ENCODE measurements at regions of chr10 and their contacts with region 1.

Region 1: DNA sequence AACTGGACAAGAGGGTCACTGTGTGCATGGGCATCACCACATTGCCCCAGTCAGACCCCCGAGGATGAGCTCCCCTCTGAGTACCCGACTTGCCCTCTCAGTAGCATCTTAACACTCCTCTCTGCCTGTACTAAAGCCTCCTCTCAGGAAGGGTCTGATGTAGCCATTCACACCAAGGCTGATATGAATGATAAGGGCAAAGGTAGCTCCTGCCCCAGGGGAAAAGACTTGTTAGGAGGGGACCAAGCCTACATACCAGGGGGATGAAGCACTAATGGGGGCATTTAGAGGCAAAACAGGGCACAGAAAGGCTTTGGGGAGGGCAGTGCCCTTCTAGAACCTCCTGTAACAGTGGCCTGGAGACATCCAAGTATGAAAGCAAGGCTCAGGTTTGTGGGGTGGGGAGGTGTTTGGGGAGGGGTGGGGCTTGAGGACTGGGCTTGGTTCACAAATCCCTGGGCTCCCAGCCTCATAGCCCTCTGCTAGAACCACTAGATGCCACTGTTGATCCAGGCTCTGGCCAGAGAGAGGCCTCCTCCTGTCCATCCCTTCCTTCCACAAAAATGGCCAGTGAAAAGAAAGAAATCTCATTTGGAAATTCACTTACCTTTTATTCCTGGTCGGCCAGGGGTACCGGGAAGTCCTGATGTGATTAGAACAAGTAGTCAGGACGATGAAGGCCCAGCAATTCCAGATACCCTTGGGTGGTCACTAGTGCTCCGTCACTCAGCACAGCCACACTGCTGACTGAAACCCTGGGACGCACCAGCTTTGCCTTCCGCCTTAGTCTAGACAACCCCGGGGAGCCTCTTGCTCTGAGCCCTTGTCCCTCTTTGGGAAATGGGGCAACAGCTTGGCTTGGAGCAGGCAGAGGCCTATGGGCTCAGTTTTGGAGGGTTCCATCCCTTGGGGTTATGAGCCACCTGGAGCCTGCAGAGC is 40.3 kb downstream of the COL17A1 start:
- DNase-seq: peak in 1 of 5 donors; percentile 34
- ATAC-seq: peak; percentile 77 to 89 (median 80)
- H3K4me3 ChIP-seq: no peak overlapping the region
- H3K27ac ChIP-seq: no peak overlapping the region
- H3K4me1 ChIP-seq: peaks cover 0 to 13% (median 0%) of the 10 kb centered on the region in 12 donors
- H3K27me3 ChIP-seq: no peaks in the 10 kb centered on the region
- CTCF ChIP-seq: peak; percentile 42 to 68 (median 54)
- POLR2A ChIP-seq: no peak

Region 2: GRCh38 chr10:104067525-104067924 is 22.1 kb after region 1 on chr10:
- intact Hi-C with region 1: no loop called
- DNase-seq: no peak
- ATAC-seq: no peak
- H3K4me3 ChIP-seq: peak overlapping the region in 1 of 12 donors; percentile 26
- H3K27ac ChIP-seq: no peak overlapping the region
- H3K4me1 ChIP-seq: no peaks in the 10 kb centered on the region
- H3K27me3 ChIP-seq: no peaks in the 10 kb centered on the region
- CTCF ChIP-seq: no peak
- POLR2A ChIP-seq: no peak

Region 3: DNA sequence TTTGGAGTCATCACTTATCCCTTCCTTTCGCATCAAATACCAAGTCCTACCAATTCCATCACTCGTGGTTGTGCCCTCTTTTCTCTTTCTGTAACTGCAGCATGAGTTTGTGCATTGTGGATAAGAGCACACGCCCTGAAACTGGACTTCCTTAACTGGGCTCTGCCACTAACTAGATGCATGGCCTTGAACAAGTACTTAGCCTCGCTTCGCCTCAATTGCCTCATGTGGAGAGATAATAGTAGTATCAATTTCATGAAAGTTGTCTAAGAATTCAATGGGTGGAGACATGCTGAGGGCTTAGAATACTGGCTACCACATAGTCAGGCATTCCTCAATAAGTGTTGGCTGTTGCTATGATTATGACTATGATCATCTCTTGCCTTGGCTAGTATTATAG is 145.3 kb after region 1 on chr10:
- intact Hi-C with region 1: no loop called
- DNase-seq: no peak
- ATAC-seq: no peak
- H3K4me3 ChIP-seq: no peak overlapping the region
- H3K27ac ChIP-seq: no peak overlapping the region
- H3K4me1 ChIP-seq: no peaks in the 10 kb centered on the region
- H3K27me3 ChIP-seq: no peaks in the 10 kb centered on the region
- CTCF ChIP-seq: no peak
- POLR2A ChIP-seq: no peak

Region 4: DNA sequence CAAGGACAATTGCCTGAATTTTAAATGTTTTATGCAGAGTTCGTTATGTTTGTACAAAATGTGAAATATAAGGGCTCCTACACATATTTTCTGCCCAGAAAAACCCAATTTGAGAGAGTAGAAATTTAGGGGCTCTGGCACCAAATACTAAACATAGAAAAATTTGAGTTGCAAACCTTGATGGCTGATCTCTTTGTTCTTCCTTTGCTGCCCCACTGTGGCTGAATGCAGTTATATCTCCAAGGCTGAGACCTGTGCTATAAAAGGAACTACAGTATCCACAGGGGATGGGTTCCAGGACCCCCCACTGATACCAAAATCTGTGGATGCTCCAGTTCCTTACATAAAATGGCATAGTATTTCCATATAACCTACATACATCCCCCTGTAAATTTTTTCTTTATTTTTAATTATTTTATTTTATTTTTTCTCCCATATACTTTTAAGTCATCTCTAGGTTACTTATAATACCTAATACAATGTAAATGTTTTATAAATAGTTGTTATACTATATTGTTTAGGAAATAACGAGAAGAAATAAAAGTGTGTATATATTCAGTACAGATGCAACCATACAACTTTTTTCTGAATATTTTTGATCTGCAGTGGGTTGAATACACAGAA is 164.3 kb after region 1 on chr10:
- intact Hi-C with region 1: loop called (anchors 1 to 5 kb)
- DNase-seq: peak in 2 of 5 donors; percentile 20 to 33
- ATAC-seq: peak in 3 of 4 donors; percentile 49 to 71 (median 68)
- H3K4me3 ChIP-seq: no peak overlapping the region
- H3K27ac ChIP-seq: no peak overlapping the region
- H3K4me1 ChIP-seq: peaks cover 0 to 4% (median 0%) of the 10 kb centered on the region in 12 donors
- H3K27me3 ChIP-seq: no peaks in the 10 kb centered on the region
- CTCF ChIP-seq: peak; percentile 30 to 70 (median 52)
- POLR2A ChIP-seq: no peak

Region 5: GRCh38 chr10:104218751-104219150 is 173.3 kb after region 1 on chr10:
- intact Hi-C with region 1: loop called in 1 of 10 experiments (anchors 5 kb)
- DNase-seq: no peak
- ATAC-seq: no peak
- H3K4me3 ChIP-seq: no peak overlapping the region
- H3K27ac ChIP-seq: no peak overlapping the region
- H3K4me1 ChIP-seq: no peaks in the 10 kb centered on the region
- H3K27me3 ChIP-seq: no peaks in the 10 kb centered on the region
- CTCF ChIP-seq: no peak
- POLR2A ChIP-seq: no peak

Measured in heart left ventricle (tissue), 16 donors.